ENCODE measurements at regions of chr18 and their contacts with region 1.

Region 1: GRCh38 chr18:62425465-62426195 is 97.2 kb upstream of the ZCCHC2 start:
- DNase-seq: peak; percentile 76
- ATAC-seq: peak; percentile 35
- H3K4me3 Mint-ChIP-seq: no peak overlapping the region
- H3K27ac Mint-ChIP-seq: no peak overlapping the region
- H3K4me1 Mint-ChIP-seq: peaks cover 32% of the 10 kb centered on the region
- H3K27me3 Mint-ChIP-seq: peaks cover 2% of the 10 kb centered on the region

Region 2: GRCh38 chr18:62186774-62187542 is 238.7 kb before region 1 on chr18 and contains the starts of genes PIGN and RELCH:
- CTCF ChIA-PET with region 1: interaction called, 5 read pairs
- POLR2A ChIA-PET with region 1: interaction called, 16 read pairs
- DNase-seq: peak; percentile 98
- ATAC-seq: peak; percentile 93
- H3K4me3 Mint-ChIP-seq: peak within 1 kb of the TSS; percentile 90
- H3K27ac Mint-ChIP-seq: peak within 1 kb of the TSS; percentile 92
- H3K4me1 Mint-ChIP-seq: peaks cover 50% of the 10 kb centered on the region
- H3K27me3 Mint-ChIP-seq: no peaks in the 10 kb centered on the region
- total RNA-seq, gene PIGN: 27.3 to 27.9 TPM
- total RNA-seq, gene RELCH: 32.8 to 37.4 TPM

Region 3: DNA sequence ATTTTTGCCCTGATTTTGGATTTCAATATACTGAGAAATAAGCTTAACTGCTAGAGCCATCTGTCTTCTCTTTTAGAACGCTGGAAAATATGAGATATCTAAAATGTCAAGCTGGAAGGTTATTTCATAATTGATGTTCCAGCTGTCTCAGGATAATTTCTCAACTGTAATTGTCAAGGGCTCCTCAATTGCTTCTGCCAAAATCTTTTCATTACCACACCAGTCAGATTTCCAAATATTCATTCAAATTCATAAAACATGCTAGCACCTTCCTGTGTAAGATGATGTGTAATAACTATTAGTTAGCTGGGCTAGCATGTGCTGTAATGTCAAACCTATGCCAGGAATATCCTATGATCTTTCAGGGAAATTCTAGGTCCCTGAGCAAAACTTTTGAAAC is 12.4 kb before region 1 on chr18:
- CTCF ChIA-PET with region 1: interaction called, 27 read pairs
- POLR2A ChIA-PET with region 1: interaction called, 3 read pairs
- DNase-seq: no peak
- ATAC-seq: no peak
- H3K4me3 Mint-ChIP-seq: no peak overlapping the region
- H3K27ac Mint-ChIP-seq: no peak overlapping the region
- H3K4me1 Mint-ChIP-seq: peaks cover 9% of the 10 kb centered on the region
- H3K27me3 Mint-ChIP-seq: peaks cover 2% of the 10 kb centered on the region

Region 4: DNA sequence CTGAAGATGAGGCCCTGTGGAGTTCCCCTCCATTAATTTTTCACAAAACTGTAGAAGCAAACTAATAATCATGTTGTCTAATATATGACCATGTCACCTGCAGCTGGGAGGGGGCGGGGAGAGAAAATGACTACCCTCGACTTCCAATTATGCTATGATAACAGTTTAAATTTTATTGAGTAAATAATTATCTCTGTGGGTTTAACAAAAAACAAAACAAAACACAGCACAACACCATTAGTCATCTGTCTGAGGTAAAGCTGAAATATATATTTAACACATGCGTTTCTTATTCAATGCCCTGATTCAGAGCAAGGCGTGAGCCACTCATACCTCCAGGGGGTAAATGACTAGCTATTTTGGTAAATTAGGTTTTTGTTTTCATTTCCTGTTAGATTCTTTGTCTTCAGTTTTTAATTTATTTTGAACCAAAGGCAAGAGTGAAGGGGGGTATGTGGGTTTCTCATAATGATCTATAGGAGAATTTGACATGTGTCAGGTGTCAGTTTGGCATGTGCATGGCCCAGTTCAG is 19.8 kb after region 1 on chr18:
- CTCF ChIA-PET with region 1: interaction called, 10 read pairs
- POLR2A ChIA-PET with region 1: no interaction called
- DNase-seq: no peak
- ATAC-seq: no peak
- H3K4me3 Mint-ChIP-seq: no peak overlapping the region
- H3K27ac Mint-ChIP-seq: no peak overlapping the region
- H3K4me1 Mint-ChIP-seq: no peaks in the 10 kb centered on the region
- H3K27me3 Mint-ChIP-seq: peaks cover 5% of the 10 kb centered on the region

Region 5: GRCh38 chr18:62522504-62523254 is 97.0 kb after region 1 on chr18 and contains the start of gene ZCCHC2:
- CTCF ChIA-PET with region 1: interaction called, 17 read pairs
- POLR2A ChIA-PET with region 1: interaction called, 15 read pairs
- DNase-seq: peak; percentile 98
- ATAC-seq: peak; percentile 84
- H3K4me3 Mint-ChIP-seq: peak within 1 kb of the TSS; percentile 94
- H3K27ac Mint-ChIP-seq: peak within 1 kb of the TSS; percentile 91
- H3K4me1 Mint-ChIP-seq: peaks cover 27% of the 10 kb centered on the region
- H3K27me3 Mint-ChIP-seq: no peaks in the 10 kb centered on the region
- total RNA-seq, gene ZCCHC2: 45.5 to 46.4 TPM

Region 6: DNA sequence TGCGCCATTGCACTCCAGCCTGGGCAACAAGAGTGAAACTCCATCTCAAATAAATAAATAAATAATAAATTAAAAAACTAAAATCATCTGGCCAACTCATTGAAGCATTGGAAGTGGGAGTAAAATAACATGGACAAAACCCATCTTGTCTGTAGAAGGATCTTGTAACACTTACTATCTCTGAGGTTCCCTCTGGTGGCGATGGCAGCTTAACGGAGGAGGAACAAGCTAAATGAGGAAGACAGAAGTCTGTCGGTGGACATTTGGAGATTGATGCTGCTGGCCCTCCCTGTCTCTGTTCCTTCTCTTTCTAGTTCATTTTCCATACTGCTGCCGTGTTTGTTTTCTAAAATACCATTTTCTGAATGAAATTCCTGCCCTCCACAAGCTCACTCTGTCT is 140.6 kb after region 1 on chr18:
- CTCF ChIA-PET with region 1: interaction called, 11 read pairs
- POLR2A ChIA-PET with region 1: no interaction called
- DNase-seq: no peak
- ATAC-seq: no peak
- H3K4me3 Mint-ChIP-seq: no peak overlapping the region
- H3K27ac Mint-ChIP-seq: no peak overlapping the region
- H3K4me1 Mint-ChIP-seq: peaks cover 2% of the 10 kb centered on the region
- H3K27me3 Mint-ChIP-seq: no peaks in the 10 kb centered on the region

Measured in activated CD8-positive, alpha-beta T cell treated with anti-CD3 and anti-CD28 coated beads, Interleukin-2, amount 10 ng/mL, durations not matched to agents 7 days and 5 days (primary cell).